Activated CD8-positive, alpha-beta memory T cell treated with anti-CD3 and anti-CD28 coated beads, Interleukin-2, amount 10 ng/mL, durations not matched to agents 7 days and 5 days (primary cell): ENCODE measurements at regions of chr19 and their contacts with region 1.

Region 1: DNA sequence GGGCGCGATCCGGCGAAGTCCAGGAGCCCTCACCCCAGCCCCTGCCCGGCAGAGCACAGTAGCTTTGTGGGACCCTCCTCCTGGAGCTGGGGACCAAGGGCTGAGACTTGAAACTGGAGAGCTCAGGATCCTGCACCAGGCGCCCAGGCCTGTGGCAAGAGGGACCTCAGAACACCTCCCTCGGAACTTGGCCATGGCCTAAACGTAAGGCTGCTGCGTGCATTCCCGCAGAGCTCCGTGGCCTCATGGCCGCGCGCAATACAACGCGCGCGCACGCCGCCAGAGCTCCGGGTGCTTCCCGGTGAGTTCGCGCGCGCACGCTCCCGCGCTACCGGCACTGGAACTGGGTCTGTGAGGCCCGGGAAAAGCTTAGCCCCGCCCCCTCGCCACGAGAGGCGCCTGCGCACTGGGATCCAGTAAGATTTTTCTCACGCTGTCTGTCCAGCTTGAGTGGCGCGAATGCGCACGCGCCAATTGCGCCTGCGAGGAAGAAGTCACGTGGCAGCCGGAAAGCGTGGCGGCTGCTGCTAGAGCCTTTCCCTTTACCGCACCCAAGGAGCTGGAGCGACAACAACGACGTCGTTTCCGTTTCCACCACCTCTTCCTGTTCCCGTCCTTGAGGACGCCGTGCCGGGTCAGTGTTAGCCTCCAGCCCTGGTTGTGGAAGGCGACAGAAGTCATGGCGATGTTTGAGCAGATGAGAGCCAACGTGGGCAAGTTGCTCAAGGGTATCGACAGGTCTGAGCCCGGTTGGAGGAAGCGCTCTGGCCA is at the start of gene EIF3K:
- DNase-seq: peak; percentile 99
- ATAC-seq: peak; percentile 74
- H3K4me3 Mint-ChIP-seq: peak within 1 kb of the TSS; percentile 96
- H3K27ac Mint-ChIP-seq: peak within 1 kb of the TSS; percentile 89
- H3K4me1 Mint-ChIP-seq: peaks cover 48% of the 10 kb centered on the region
- H3K27me3 Mint-ChIP-seq: no peaks in the 10 kb centered on the region
- total RNA-seq, gene EIF3K: 281 to 308 TPM

Region 2: DNA sequence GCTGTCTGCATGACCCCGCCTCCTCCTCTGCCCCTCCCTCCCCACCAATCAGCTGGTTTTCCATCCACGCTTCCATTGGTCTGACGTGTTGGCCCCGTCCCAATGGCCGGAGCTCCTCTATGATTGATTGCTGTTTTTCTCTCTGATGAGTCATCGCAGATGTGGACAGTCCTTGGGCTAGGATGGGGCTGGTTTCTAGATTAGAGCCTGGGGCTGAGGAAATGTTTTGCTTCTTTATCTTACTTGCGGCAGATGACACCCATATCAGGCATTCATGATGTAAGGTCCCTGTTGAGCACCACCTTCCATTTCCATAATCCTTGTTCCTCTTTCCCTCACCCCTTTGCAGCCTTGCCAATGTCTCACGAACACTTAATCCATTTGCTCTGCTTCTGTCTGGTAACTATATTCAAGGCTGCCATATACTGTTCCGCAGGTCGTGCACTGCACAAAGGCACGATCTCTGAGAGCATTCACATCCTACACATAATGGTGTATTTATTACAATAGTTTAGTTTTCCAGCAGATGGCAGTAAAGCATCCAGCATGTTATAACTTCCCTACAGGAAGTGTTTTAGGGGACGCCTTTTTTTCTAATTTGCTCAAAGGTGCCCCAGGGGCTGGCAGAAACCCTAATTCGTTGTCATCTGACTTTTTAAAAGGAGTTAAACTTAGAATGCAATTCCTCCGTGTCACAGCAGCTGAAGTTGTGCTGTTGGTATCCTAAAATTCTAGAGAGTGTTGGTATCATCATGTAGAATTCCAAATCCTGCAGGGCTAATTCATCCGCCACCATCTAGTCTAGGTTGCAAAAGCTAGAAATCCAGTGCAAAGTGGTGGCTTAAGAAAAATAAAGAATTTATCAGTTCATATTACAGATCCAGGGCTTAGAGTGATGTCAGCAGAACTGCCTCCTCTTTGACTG is 74.5 kb before region 1 on chr19:
- CTCF ChIA-PET with region 1: interaction called, 23 read pairs
- DNase-seq: peak; percentile 64
- ATAC-seq: peak; percentile 93
- H3K4me3 Mint-ChIP-seq: peak overlapping the region; percentile 19
- H3K27ac Mint-ChIP-seq: peak overlapping the region; percentile 71
- H3K4me1 Mint-ChIP-seq: peaks cover 28% of the 10 kb centered on the region
- H3K27me3 Mint-ChIP-seq: no peaks in the 10 kb centered on the region

Region 3: GRCh38 chr19:38557205-38557799 is 61.5 kb before region 1 on chr19:
- CTCF ChIA-PET with region 1: interaction called, 36 read pairs
- DNase-seq: peak; percentile 91
- ATAC-seq: peak; percentile 75
- H3K4me3 Mint-ChIP-seq: peak overlapping the region; percentile 69
- H3K27ac Mint-ChIP-seq: peak overlapping the region; percentile 95
- H3K4me1 Mint-ChIP-seq: peaks cover 74% of the 10 kb centered on the region
- H3K27me3 Mint-ChIP-seq: peaks cover 7% of the 10 kb centered on the region